ENCODE measurements at regions of chr6 and their contacts with region 1.

Region 1: DNA sequence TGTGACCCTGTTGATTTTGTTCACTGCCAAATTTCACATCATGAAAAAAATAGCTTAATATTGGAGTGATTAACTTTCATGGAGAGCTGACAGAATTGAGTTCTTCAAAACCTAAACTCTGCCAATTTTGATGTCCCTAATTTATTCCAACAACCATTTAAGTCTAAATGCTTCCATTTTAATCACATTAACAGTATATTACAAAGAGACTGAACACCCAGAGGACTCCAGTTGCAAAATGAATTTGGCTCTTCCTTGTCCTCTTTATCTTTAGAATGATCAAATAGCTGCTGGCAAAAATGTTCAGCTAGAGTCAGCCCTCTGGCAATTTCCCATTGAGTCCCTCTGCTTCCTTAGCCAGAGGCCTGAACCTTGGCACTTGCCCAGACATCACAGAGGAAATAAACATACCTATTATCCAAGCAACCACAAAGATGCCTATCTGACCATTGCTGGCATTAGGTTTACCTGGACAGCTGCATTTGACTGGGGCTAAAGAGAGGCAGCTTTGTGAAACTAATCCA is 299.0 kb upstream of the STXBP5 start:
- DNase-seq: peak; percentile 51
- H3K4me3 ChIP-seq: no peak overlapping the region
- H3K27ac ChIP-seq: no peak overlapping the region
- H3K4me1 ChIP-seq: peaks cover 6% of the 10 kb centered on the region
- H3K27me3 ChIP-seq: no peaks in the 10 kb centered on the region
- CTCF ChIP-seq: no peak
- POLR2A ChIP-seq: no peak

Region 2: GRCh38 chr6:147222160-147222838 is 317.1 kb after region 1 on chr6:
- CTCF ChIA-PET with region 1: interaction called, 8 read pairs
- POLR2A ChIA-PET with region 1: no interaction called
- dilution Hi-C with region 1: no loop called
- intact Hi-C with region 1: loop called (anchors 1 kb)
- DNase-seq: peak; percentile 47
- H3K4me3 ChIP-seq: no peak overlapping the region
- H3K27ac ChIP-seq: no peak overlapping the region
- H3K4me1 ChIP-seq: no peaks in the 10 kb centered on the region
- H3K27me3 ChIP-seq: no peaks in the 10 kb centered on the region
- CTCF ChIP-seq: peak in 1 of 2 donors; percentile 33
- POLR2A ChIP-seq: no peak

Region 3: GRCh38 chr6:147244832-147245231 is 339.6 kb after region 1 on chr6:
- CTCF ChIA-PET with region 1: no interaction called
- POLR2A ChIA-PET with region 1: interaction called, 11 read pairs
- dilution Hi-C with region 1: no loop called
- intact Hi-C with region 1: no loop called
- DNase-seq: no peak
- H3K4me3 ChIP-seq: no peak overlapping the region
- H3K27ac ChIP-seq: no peak overlapping the region
- H3K4me1 ChIP-seq: no peaks in the 10 kb centered on the region
- H3K27me3 ChIP-seq: no peaks in the 10 kb centered on the region
- CTCF ChIP-seq: no peak
- POLR2A ChIP-seq: no peak

Region 4: GRCh38 chr6:147285087-147285855 is 380.0 kb after region 1 on chr6:
- CTCF ChIA-PET with region 1: interaction called, 4 read pairs
- POLR2A ChIA-PET with region 1: no interaction called
- dilution Hi-C with region 1: no loop called
- intact Hi-C with region 1: loop called (anchors 1 kb)
- DNase-seq: peak; percentile 62
- H3K4me3 ChIP-seq: no peak overlapping the region
- H3K27ac ChIP-seq: no peak overlapping the region
- H3K4me1 ChIP-seq: peaks cover 12% of the 10 kb centered on the region
- H3K27me3 ChIP-seq: no peaks in the 10 kb centered on the region
- CTCF ChIP-seq: peak; percentile 26 to 27
- POLR2A ChIP-seq: no peak